Cardiac septum (tissue), 1 donor: ENCODE measurements at regions of chr5 and their contacts with region 1.

Region 1: DNA sequence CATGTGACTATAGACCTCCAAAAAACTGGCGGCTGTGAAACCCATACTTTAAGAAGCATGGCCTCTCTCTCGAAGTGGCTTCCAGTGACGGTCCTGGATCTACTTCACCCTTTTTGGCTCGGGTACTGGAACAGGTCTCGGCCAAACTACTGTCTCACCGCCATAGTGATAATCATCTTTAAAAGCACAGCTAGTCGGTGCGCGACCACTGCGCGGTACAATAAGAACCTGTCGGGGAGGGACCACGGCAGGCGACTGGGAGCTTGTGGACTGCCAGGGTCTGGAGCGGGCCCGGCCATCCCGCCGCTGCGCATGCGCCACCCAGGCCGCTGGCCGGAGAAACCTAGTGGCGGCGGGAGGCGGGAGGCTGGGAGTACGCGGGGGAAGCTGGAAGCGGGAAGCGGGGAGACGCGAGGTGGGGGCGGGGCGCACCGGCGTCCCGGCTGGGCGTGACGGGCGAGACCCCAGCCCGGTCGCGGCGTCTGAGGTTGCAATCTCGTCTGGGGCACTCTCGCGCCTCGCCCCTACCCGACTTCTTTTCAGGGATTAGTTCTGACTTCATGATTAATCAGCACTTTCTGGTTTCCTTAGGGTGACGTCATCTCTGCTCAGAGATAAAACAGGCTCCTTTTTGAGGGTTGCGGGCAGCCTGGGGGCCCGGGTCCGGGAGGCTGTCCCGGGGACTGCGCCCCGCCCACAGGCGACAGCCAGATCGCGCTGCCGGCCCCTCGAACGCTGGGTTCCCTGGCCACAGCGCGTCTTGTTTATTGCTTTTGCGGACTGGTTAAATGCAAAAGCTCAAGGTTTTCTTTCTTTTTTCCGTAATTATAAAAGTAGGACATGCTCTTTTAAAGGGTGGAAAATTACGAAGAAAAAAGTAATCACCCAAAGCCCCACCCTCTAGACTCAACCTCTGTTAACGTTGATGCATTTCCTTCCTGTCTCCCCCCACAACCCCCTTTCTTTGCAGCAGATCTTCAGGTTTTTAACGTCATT is 266.8 kb downstream of the CWC27 start:
- DNase-seq: peak; percentile 93

Region 2: DNA sequence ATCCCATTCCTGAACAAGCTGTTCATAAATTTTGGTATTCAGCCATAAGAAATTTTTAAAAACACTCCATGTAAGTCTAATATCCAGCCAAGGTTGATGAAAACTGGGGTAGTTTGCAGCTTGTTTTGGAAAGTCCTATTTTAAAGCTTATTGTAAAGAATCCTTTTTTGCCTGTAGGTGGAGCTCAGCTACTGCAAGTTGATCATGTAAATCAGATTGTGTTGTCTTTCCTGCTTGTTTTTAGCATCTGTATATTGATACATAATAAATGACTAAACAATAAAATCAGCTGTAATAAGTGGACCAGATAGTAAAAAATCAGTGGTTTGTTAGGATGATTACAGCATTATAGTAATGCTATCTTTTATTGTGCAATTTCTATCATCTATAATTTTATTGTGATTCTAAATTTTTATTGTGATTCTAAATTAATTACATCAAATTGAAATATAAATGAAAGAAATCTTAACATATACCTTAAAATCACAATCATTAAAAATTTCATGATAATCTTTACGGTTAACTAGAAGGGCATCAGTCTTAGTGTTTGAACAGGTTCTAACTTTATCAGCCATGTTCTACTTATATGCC is 224.4 kb before region 1 on chr5:
- intact Hi-C with region 1: loop called (anchors 5 kb)
- DNase-seq: no peak

Region 3: DNA sequence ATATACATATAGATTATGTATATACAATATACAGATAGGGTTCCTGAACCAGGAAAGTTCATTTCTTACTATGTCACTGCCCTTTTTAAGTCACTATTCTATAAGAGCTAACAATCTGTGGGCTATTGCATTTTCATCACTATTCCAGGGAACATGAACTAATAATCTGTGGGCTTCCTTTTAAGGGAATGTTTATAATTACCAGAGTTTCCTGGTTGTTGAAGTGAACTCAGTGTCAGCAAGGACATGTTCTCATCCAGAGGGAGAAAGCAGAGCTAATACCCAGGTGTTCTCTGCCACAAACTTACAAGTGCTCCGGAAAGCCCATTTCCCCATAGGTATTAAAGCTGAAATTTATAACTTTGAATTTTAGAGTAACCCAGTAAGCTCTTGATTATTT is 197.1 kb before region 1 on chr5:
- intact Hi-C with region 1: loop called (anchors 5 kb)
- DNase-seq: no peak

Region 4: GRCh38 chr5:65413822-65414221 is 378.3 kb after region 1 on chr5:
- intact Hi-C with region 1: no loop called
- DNase-seq: no peak